Endothelial cell of umbilical vein (primary cell): ENCODE measurements at regions of chr11 and their contacts with region 1.

Region 1: GRCh38 chr11:75142714-75143419 is 8.0 kb upstream of the SLCO2B1 start:
- DNase-seq: peak; percentile 90
- H3K4me3 ChIP-seq: no peak overlapping the region
- H3K27ac ChIP-seq: peak overlapping the region; percentile 6
- H3K4me1 ChIP-seq: peaks cover 16% of the 10 kb centered on the region
- H3K27me3 ChIP-seq: peaks cover 2 to 9% of the 10 kb centered on the region in 2 experiments
- CTCF ChIP-seq: no peak
- POLR2A ChIP-seq: no peak

Region 2: DNA sequence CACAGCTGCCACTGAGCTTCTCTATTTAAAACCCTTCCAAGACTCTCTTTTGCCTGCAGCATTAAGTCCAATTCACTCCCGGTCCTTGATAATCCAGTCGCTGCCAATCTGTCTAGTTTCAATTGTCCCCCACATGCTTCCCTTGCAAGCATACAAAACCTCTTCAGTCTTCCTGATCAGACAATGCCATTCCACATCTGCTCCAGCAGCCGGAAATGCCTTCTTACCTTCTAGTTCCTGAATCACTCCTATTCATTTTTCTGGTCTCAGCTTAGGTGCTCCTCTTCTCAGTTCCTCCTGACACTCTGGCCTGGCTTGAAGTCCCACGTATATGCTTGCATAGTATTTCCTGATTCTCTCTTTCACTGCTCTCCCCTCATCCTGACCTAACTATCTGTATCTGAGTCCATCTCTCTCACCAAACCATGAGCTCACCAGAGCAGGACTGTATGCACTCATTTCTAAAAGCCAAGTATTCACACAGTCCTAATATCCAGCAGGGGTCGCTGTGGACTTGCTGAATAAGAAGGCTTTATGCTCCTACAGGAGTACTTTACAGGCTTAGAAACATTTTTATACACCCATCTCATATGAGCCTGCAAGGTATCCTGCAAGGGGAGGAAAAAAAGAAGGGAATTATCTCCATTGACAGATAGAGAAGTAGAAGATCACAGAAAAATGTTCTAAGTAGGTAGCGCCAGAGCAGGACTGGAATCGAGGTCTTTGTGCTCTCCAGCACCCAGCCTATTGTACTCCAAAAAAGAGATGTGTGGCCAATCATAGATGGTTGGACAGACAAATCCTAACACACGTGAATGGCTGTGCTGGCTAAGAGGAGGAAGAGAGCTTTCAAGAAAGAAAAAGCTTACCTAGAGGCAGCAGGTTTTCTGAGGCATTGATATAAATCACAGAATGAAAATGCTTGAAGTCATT is 213.2 kb before region 1 on chr11:
- CTCF ChIA-PET with region 1: interaction called, 49 read pairs
- POLR2A ChIA-PET with region 1: interaction called, 3 read pairs
- dilution Hi-C with region 1: no loop called
- intact Hi-C with region 1: loop called (anchors 1 kb)
- DNase-seq: peak; percentile 84
- H3K4me3 ChIP-seq: no peak overlapping the region
- H3K27ac ChIP-seq: peak overlapping the region; percentile 23
- H3K4me1 ChIP-seq: peaks cover 25% of the 10 kb centered on the region
- H3K27me3 ChIP-seq: no peaks in the 10 kb centered on the region
- CTCF ChIP-seq: peak; percentile 70 to 78
- POLR2A ChIP-seq: no peak

Region 3: GRCh38 chr11:75126564-75126963 is 16.3 kb before region 1 on chr11:
- CTCF ChIA-PET with region 1: interaction called, 34 read pairs
- POLR2A ChIA-PET with region 1: no interaction called
- dilution Hi-C with region 1: no loop called
- intact Hi-C with region 1: no loop called
- DNase-seq: no peak
- H3K4me3 ChIP-seq: no peak overlapping the region
- H3K27ac ChIP-seq: no peak overlapping the region
- H3K4me1 ChIP-seq: no peaks in the 10 kb centered on the region
- H3K27me3 ChIP-seq: peaks cover 0 to 4% of the 10 kb centered on the region in 2 experiments
- CTCF ChIP-seq: no peak
- POLR2A ChIP-seq: no peak

Region 4: GRCh38 chr11:75170521-75171216 is 27.8 kb after region 1 on chr11:
- CTCF ChIA-PET with region 1: interaction called, 13 read pairs
- POLR2A ChIA-PET with region 1: no interaction called
- dilution Hi-C with region 1: no loop called
- intact Hi-C with region 1: no loop called
- DNase-seq: no peak
- H3K4me3 ChIP-seq: no peak overlapping the region
- H3K27ac ChIP-seq: no peak overlapping the region
- H3K4me1 ChIP-seq: no peaks in the 10 kb centered on the region
- H3K27me3 ChIP-seq: peaks cover 2 to 5% of the 10 kb centered on the region in 2 experiments
- CTCF ChIP-seq: no peak
- POLR2A ChIP-seq: no peak

Region 5: GRCh38 chr11:75188671-75189070 is 45.8 kb after region 1 on chr11:
- CTCF ChIA-PET with region 1: interaction called, 53 read pairs
- POLR2A ChIA-PET with region 1: no interaction called
- dilution Hi-C with region 1: no loop called
- intact Hi-C with region 1: loop called (anchors 1 kb)
- DNase-seq: no peak
- H3K4me3 ChIP-seq: no peak overlapping the region
- H3K27ac ChIP-seq: no peak overlapping the region
- H3K4me1 ChIP-seq: no peaks in the 10 kb centered on the region
- H3K27me3 ChIP-seq: peaks cover 6% of the 10 kb centered on the region in 2 experiments
- CTCF ChIP-seq: no peak
- POLR2A ChIP-seq: no peak

Region 6: DNA sequence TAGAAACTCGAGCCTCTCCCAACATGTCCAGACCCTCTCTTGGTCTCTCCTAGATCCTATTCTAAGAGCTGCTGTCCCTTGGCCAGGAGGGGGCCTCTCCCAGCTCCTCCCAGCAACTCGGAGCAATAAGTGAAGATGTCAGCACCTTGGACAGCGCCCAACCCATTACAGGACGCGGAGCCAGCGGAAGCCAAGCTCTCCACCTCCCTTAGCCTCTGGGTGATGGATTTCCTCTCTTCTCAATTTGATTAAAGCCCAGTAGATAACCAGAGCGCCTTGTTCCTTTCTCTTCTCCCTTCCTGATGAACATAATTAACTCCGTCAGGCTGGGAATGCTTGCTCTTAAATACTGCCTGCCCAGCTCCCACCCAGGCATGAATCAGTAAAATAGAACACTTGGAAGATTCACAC is 71.5 kb after region 1 on chr11:
- CTCF ChIA-PET with region 1: interaction called, 14 read pairs
- POLR2A ChIA-PET with region 1: no interaction called
- dilution Hi-C with region 1: no loop called
- intact Hi-C with region 1: no loop called
- DNase-seq: peak; percentile 73
- H3K4me3 ChIP-seq: no peak overlapping the region
- H3K27ac ChIP-seq: no peak overlapping the region
- H3K4me1 ChIP-seq: no peaks in the 10 kb centered on the region
- H3K27me3 ChIP-seq: peaks cover under 1 to 1% of the 10 kb centered on the region in 2 experiments
- CTCF ChIP-seq: peak; percentile 48 to 63
- POLR2A ChIP-seq: no peak

Region 7: GRCh38 chr11:75248690-75249268 is 105.9 kb after region 1 on chr11:
- CTCF ChIA-PET with region 1: interaction called, 507 read pairs
- POLR2A ChIA-PET with region 1: interaction called, 4 read pairs
- dilution Hi-C with region 1: no loop called
- intact Hi-C with region 1: loop called (anchors 1 kb)
- DNase-seq: peak; percentile 88
- H3K4me3 ChIP-seq: no peak overlapping the region
- H3K27ac ChIP-seq: no peak overlapping the region
- H3K4me1 ChIP-seq: no peaks in the 10 kb centered on the region
- H3K27me3 ChIP-seq: peaks cover 19 to 28% of the 10 kb centered on the region in 2 experiments
- CTCF ChIP-seq: peak; percentile 99 to 100
- POLR2A ChIP-seq: no peak

Region 8: DNA sequence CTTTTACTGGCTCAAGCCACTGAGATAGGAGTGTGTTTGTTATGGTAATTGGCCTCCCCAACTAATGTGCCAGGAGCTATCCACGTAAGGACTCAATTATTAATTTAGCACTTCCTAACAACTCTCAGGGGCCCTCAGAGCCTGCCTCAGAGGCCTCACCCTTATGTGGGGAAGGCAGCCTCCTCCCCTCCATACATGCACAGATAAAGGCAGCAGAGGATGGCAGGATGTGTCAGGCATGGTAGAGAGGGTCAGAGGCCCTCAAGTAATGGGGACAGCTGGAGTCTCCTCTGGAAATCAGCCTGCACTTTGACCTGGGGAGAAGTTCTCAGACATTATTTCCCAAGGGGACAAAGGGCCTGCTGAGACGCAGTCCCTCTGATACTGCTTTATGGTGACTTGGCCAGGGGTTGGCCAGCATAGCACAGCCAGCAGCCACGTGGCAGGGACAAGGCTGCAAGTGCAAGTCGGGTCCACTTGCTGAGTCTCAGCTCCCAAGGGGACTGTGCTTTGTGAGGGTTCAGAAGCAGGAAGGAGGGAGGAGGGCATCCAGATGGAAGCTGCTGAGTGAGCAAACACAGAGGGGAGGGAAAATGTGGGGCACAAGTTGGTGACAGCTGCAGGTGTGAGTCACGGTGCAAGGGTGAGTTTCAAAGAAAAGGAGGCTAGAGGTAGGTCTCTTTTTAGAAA is 591.8 kb after region 1 on chr11:
- CTCF ChIA-PET with region 1: no interaction called
- POLR2A ChIA-PET with region 1: no interaction called
- dilution Hi-C with region 1: no loop called
- intact Hi-C with region 1: no loop called
- DNase-seq: no peak
- H3K4me3 ChIP-seq: no peak overlapping the region
- H3K27ac ChIP-seq: no peak overlapping the region
- H3K4me1 ChIP-seq: no peaks in the 10 kb centered on the region
- H3K27me3 ChIP-seq: peaks cover 4 to 11% of the 10 kb centered on the region in 2 experiments
- CTCF ChIP-seq: no peak
- POLR2A ChIP-seq: no peak